Calu3 (cell line): ENCODE measurements at regions of chr3 and their contacts with region 1.

Region 1: GRCh38 chr3:148943506-148944205 is 47.7 kb upstream of the GYG1 start:
- DNase-seq: peak; percentile 55
- H3K4me3 Mint-ChIP-seq: no peak overlapping the region
- H3K27ac Mint-ChIP-seq: no peak overlapping the region
- H3K4me1 Mint-ChIP-seq: peaks cover 13% of the 10 kb centered on the region
- H3K27me3 Mint-ChIP-seq: peaks cover 29% of the 10 kb centered on the region
- CTCF ChIP-seq: peak; percentile 84

Region 2: GRCh38 chr3:148379763-148380382 is 563.8 kb before region 1 on chr3:
- CTCF ChIA-PET with region 1: interaction called, 3 read pairs
- intact Hi-C with region 1: loop called (anchors 1 kb)
- DNase-seq: peak; percentile 55
- H3K4me3 Mint-ChIP-seq: no peak overlapping the region
- H3K27ac Mint-ChIP-seq: no peak overlapping the region
- H3K4me1 Mint-ChIP-seq: no peaks in the 10 kb centered on the region
- H3K27me3 Mint-ChIP-seq: no peaks in the 10 kb centered on the region
- CTCF ChIP-seq: peak; percentile 39

Region 3: DNA sequence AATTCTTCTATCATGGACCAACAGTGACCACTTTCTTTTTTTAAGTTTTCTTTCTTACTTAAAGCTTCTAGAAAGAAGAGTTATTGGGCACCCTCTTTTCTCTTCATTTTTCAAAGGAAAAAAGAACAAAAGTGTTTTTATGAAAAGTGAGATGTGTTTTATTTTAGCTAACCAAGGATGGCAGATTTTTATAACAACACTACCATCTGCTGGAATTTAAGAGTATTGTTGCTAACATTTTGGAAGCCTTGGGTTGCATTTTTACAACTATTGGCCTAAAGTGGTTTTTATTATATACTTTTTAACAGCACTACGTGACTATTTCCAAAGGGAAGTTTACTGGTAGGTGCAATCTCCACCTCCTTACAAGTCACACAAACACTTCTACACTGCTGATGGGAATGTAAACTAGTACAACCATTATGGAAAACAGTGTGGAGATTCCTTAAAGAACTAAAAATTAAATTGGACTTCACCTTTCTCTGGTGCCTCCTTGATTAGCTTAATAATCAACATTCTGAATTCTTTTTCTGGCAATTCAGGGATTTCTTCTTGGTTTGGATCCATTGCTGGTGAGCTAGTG is 483.6 kb before region 1 on chr3:
- CTCF ChIA-PET with region 1: no interaction called
- intact Hi-C with region 1: loop called (anchors 10 kb)
- DNase-seq: no peak
- H3K4me3 Mint-ChIP-seq: no peak overlapping the region
- H3K27ac Mint-ChIP-seq: no peak overlapping the region
- H3K4me1 Mint-ChIP-seq: no peaks in the 10 kb centered on the region
- H3K27me3 Mint-ChIP-seq: no peaks in the 10 kb centered on the region
- CTCF ChIP-seq: peak; percentile 64

Region 4: DNA sequence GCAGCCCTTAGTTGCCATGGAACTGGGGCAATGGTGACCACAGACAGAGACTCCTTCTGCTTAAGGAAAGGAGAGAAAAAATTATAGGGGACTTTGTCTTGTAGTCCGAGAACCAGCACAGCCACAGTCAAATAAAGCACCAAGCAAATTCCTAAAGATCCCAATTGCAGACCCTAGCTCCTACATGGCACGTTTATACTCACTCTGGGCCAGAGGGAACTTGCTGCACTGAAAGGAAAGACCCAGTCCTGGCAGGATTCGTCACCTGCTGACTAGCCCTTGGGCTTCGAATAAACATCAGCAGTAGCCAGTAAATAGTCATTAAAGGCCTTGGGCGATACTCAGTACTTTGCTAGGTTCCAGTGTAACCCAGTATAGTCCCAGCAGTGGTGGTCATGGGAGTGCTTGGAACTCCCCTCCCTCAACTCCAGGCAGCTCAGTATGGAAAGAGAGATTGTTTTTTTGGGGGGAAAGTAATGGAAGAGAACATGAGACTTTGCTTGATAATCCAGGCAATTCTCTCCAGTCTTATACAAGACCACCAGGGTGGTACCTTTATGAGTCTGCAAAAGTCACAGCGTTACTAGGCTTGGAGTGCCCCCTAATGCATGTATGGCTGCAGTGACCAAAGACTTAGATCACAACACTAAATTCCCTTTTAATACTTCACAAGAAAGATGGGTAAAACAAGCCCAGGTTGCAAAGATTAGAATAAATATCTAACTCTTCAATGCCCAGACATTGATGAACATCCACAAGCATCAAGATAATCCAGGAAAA is 312.3 kb before region 1 on chr3:
- CTCF ChIA-PET with region 1: no interaction called
- intact Hi-C with region 1: loop called (anchors 10 kb)
- DNase-seq: peak; percentile 40
- H3K4me3 Mint-ChIP-seq: no peak overlapping the region
- H3K27ac Mint-ChIP-seq: no peak overlapping the region
- H3K4me1 Mint-ChIP-seq: no peaks in the 10 kb centered on the region
- H3K27me3 Mint-ChIP-seq: no peaks in the 10 kb centered on the region
- CTCF ChIP-seq: peak; percentile 47

Region 5: DNA sequence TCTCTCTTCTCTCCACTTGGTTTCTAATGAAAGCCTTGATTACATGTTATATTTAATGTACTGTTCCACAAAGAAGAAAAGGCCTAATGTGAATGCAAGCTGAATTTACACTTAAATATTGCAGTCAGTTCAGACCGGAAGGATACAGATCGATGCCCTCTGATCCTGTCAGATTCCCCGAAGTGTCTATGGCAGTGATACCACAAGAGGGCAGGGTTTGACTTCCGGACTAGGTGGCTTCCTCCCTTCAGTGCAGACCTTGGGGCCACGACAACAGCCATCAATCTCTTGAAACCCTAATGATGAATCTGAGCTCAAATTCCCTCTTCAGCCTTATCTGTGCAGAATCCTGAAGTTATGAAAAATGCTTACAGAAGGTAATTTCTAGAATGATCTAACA is 216.4 kb before region 1 on chr3:
- CTCF ChIA-PET with region 1: interaction called, 6 read pairs
- intact Hi-C with region 1: loop called (anchors 1 kb)
- DNase-seq: peak; percentile 76
- H3K4me3 Mint-ChIP-seq: no peak overlapping the region
- H3K27ac Mint-ChIP-seq: no peak overlapping the region
- H3K4me1 Mint-ChIP-seq: peaks cover 8% of the 10 kb centered on the region
- H3K27me3 Mint-ChIP-seq: no peaks in the 10 kb centered on the region
- CTCF ChIP-seq: peak; percentile 71

Region 6: DNA sequence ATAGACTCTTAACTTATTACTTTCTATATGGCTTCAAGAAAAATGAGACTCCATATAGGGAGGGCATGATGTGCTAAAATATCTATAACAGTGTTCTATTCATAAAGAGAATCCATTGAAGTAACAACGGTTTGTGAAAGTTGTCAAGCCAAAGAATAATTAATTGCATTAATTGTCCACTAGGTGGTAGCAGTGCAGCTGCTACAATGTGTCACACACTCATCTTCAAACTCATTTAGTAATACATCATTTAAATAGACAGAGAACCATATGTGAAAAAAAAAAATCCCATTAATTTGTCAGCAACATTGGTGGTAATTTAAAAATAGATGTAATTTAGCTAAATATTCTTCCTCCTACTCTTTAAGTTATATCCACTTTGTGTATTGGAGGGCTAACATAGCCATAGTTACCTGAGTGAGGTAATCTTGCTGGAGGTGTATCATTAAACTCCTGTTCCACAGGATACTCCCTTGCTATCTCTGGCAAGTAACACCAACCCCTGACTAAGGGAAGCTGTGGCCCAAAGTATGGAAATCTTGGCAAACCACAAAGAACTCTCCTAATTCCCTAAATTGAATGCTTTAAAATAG is 82.3 kb before region 1 on chr3:
- CTCF ChIA-PET with region 1: interaction called, 10 read pairs
- intact Hi-C with region 1: loop called (anchors 1 kb)
- DNase-seq: no peak
- H3K4me3 Mint-ChIP-seq: no peak overlapping the region
- H3K27ac Mint-ChIP-seq: no peak overlapping the region
- H3K4me1 Mint-ChIP-seq: no peaks in the 10 kb centered on the region
- H3K27me3 Mint-ChIP-seq: peaks cover under 1% of the 10 kb centered on the region
- CTCF ChIP-seq: peak; percentile 82

Region 7: DNA sequence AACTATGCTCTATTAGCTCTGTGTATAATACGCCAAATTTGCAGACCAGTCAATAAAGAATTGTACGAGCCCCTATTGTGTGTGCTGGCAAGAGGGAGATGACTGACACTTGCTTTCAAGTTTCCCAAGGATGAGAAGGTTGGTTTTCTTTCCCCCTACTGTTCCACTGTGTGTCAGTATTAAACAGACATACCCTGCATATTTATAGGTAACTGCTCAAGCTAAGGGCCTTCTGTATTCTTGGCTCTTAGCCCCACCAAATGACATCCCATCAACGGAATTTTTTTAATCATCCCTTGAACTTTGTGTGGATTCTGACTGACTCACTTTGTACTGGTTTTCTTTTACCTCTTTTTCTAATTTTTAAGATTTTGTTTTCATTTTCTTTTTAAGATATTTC is 12.9 kb before region 1 on chr3:
- CTCF ChIA-PET with region 1: no interaction called
- intact Hi-C with region 1: no loop called
- DNase-seq: no peak
- H3K4me3 Mint-ChIP-seq: no peak overlapping the region
- H3K27ac Mint-ChIP-seq: no peak overlapping the region
- H3K4me1 Mint-ChIP-seq: no peaks in the 10 kb centered on the region
- H3K27me3 Mint-ChIP-seq: peaks cover 29% of the 10 kb centered on the region
- CTCF ChIP-seq: no peak

Region 8: DNA sequence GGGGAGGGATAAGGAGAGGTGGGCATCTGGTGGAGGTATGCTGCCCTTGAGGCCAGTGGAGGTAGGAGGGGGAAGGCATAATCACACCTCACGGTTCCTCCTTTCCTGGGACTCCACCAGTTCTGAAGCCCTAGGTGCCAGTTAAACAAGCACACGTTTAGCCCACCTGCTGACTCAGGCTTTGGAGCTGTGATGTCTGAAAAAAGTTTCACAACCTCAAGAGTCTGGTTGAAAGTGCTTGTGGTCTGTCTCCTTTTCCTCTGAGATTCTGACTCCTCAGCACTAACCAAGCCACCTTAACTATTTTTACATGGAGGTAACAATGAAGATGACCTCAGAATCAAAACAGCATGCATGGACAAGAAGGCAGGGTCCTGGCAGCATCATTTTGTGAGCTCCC is 208.8 kb after region 1 on chr3:
- CTCF ChIA-PET with region 1: no interaction called
- intact Hi-C with region 1: no loop called
- DNase-seq: no peak
- H3K4me3 Mint-ChIP-seq: no peak overlapping the region
- H3K27ac Mint-ChIP-seq: no peak overlapping the region
- H3K4me1 Mint-ChIP-seq: no peaks in the 10 kb centered on the region
- H3K27me3 Mint-ChIP-seq: no peaks in the 10 kb centered on the region
- CTCF ChIP-seq: no peak